ENCODE measurements at regions of chr10 and their contacts with region 1.

Region 1: DNA sequence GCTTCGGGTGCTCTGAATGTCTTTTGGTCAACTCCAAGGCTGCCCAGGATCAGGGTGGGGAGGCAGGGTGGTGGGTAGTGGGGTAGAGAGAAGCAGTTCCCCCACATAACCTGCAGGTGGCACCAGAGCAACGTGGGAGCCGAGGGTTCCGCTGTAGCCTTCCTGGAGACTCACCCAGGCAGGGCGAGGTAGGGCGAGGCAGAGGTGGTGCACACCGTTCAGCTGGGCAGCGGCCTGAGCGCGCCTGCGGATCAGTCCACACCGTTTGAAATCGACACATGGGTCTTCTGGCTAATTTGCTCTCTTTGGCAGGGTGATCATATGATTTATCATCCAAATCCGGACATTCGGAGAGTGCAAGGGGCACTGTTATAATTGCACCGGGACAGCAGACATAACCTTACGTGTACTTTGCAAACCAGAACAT is 41.4 kb upstream of the MAP3K8 start:
- DNase-seq: peak; percentile 89
- CTCF ChIP-seq: peak; percentile 80

Region 2: DNA sequence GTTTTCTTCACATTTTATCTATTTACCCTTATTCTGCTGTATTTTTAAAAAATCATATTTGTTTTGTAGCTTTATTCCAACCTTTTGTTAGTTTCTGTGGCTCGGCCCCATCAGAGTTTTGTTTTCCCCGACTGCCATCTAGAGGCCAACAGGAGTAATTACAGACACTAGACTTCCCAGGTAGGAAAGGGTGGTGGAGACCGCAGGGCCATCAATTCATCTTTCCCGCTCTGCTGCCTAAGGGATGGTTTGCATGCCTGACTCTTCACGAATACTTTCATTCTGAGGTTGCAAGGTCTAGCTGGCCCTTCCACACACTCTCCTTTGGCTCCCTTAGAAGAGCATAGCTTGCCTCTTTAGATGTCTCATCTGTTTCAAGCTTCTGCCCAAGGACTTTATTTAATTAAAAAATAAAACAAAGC is 198.7 kb after region 1 on chr10:
- in situ Hi-C with region 1: loop called (anchors 5 kb)
- DNase-seq: peak; percentile 37
- CTCF ChIP-seq: peak; percentile 68

Measured in GM13976 (cell line).